Astrocyte of the cerebellum (primary cell): ENCODE measurements at regions of chr9 and their contacts with region 1.

Region 1: GRCh38 chr9:71562140-71562539 is 206.2 kb downstream of the CEMIP2 start:
- DNase-seq: no peak
- H3K4me3 ChIP-seq: no peak overlapping the region
- CTCF ChIP-seq: no peak

Region 2: DNA sequence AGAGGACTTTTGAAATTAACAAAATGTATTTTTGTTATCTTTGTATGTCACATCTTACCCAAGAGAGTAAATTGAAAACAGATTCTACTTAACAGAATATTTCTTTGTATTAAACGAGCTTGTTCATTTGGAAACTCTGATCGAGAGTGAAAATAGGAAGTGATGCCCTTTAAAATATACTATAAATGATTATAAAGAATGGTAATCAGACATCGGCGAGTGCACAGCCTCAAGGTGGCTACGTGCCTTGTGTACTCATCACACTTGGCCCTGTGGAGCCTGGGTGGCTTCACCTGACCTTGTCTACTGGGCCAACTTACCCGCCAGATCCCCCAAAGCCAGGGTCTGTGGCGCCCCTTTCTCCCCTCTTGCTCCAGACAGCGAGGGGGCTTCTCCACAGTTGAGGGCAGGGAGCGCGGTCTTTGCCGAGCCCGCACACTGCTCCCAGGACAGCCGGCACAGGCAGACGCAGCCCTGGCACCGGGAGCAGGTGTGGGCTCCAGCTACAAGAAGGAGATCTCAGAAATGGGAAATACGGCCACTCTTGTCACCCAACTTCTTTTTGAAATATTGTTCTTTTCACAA is 37.1 kb before region 1 on chr9:
- in situ Hi-C with region 1: loop called (anchors 5 kb)
- DNase-seq: no peak
- H3K4me3 ChIP-seq: no peak overlapping the region
- CTCF ChIP-seq: no peak